ENCODE measurements at regions of chr17 and their contacts with region 1.

Region 1: GRCh38 chr17:64506576-64507477 is at the start of gene CEP95:
- DNase-seq: peak in 7 of 9 donors; percentile 85 to 98 (median 97)
- ATAC-seq: peak; percentile 78
- H3K4me3 ChIP-seq: peak within 1 kb of the TSS; percentile 98
- H3K4me3 Mint-ChIP-seq: peak within 1 kb of the TSS; percentile 97 to 100 (median 99)
- H3K27ac ChIP-seq: peak within 1 kb of the TSS; percentile 100
- H3K27ac Mint-ChIP-seq: peak within 1 kb of the TSS; percentile 99 to 100 (median 100)
- H3K4me1 ChIP-seq: peaks cover 41 to 42% of the 10 kb centered on the region in 2 donors
- H3K4me1 Mint-ChIP-seq: peaks cover 31 to 84% (median 70%) of the 10 kb centered on the region in 7 donors
- H3K27me3 ChIP-seq: no peaks in the 10 kb centered on the region
- H3K27me3 Mint-ChIP-seq: peaks cover 0 to 11% (median 0%) of the 10 kb centered on the region in 5 donors
- total RNA-seq, gene CEP95: 46.7 to 192 (median 115) TPM

Region 2: GRCh38 chr17:63621766-63622519 is 884.9 kb before region 1 on chr17 and contains the start of gene MAP3K3:
- CTCF ChIA-PET with region 1: no interaction called
- POLR2A ChIA-PET with region 1: no interaction called
- intact Hi-C with region 1: loop called in 1 of 2 experiments (anchors 2 kb)
- DNase-seq: peak; percentile 79 to 99 (median 98)
- ATAC-seq: peak; percentile 93
- H3K4me3 ChIP-seq: peak within 1 kb of the TSS; percentile 82
- H3K4me3 Mint-ChIP-seq: peak within 1 kb of the TSS; percentile 96 to 100 (median 99)
- H3K27ac ChIP-seq: peak within 1 kb of the TSS; percentile 75
- H3K27ac Mint-ChIP-seq: peak within 1 kb of the TSS; percentile 83 to 97 (median 95)
- H3K4me1 ChIP-seq: peaks cover 21 to 31% of the 10 kb centered on the region in 2 donors
- H3K4me1 Mint-ChIP-seq: peaks cover 34 to 48% (median 42%) of the 10 kb centered on the region in 7 donors
- H3K27me3 ChIP-seq: peaks cover 0 to 3% of the 10 kb centered on the region in 2 donors
- H3K27me3 Mint-ChIP-seq: peaks cover 0 to 12% (median 0%) of the 10 kb centered on the region in 5 donors
- total RNA-seq, gene MAP3K3: 37.5 to 105 (median 85.5) TPM

Region 3: GRCh38 chr17:64020056-64020766 is 486.6 kb before region 1 on chr17 and contains the start of gene ICAM2:
- CTCF ChIA-PET with region 1: no interaction called
- POLR2A ChIA-PET with region 1: interaction called, 18 read pairs
- intact Hi-C with region 1: loop called (anchors 2 to 5 kb)
- DNase-seq: peak; percentile 73 to 97 (median 96)
- ATAC-seq: peak; percentile 90
- H3K4me3 ChIP-seq: peak within 1 kb of the TSS; percentile 94
- H3K4me3 Mint-ChIP-seq: peak within 1 kb of the TSS; percentile 91 to 100 (median 98)
- H3K27ac ChIP-seq: peak within 1 kb of the TSS; percentile 96
- H3K27ac Mint-ChIP-seq: peak within 1 kb of the TSS; percentile 91 to 100 (median 100)
- H3K4me1 ChIP-seq: peaks cover 57 to 68% of the 10 kb centered on the region in 2 donors
- H3K4me1 Mint-ChIP-seq: peaks cover 45 to 79% (median 71%) of the 10 kb centered on the region in 7 donors
- H3K27me3 ChIP-seq: no peaks in the 10 kb centered on the region
- H3K27me3 Mint-ChIP-seq: peaks cover 0 to 2% (median 0%) of the 10 kb centered on the region in 5 donors
- total RNA-seq, gene ICAM2: 60.9 to 132 (median 92.3) TPM

Region 4: DNA sequence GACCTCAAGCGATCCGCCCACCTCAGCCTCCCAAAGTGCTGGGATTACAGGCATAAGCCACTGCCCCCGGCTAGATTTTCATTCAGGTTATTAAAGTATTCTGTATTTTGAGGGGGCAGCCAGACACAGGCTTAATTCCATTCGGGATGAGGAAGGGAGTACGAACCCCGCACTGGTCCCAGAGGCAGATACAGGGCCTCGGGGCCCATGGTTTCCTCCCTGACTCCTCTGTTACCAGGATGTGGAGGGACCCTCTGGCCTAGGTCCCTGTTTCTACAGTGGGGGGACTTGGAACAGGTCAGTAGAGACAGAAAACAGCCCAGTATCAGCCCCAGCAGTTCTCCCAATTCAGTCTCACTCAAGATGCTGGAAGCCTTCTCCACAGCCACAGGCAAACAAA is 158.2 kb before region 1 on chr17:
- CTCF ChIA-PET with region 1: no interaction called
- POLR2A ChIA-PET with region 1: interaction called, 24 read pairs
- intact Hi-C with region 1: loop called in 1 of 2 experiments (anchors 1 kb)
- DNase-seq: no peak
- ATAC-seq: no peak
- H3K4me3 ChIP-seq: no peak overlapping the region
- H3K4me3 Mint-ChIP-seq: peak overlapping the region in 6 of 10 donors; percentile 21 to 86 (median 73)
- H3K27ac ChIP-seq: peak overlapping the region; percentile 62
- H3K27ac Mint-ChIP-seq: peak overlapping the region in 8 of 9 donors; percentile 90 to 99 (median 95)
- H3K4me1 ChIP-seq: peaks cover 7 to 36% of the 10 kb centered on the region in 2 donors
- H3K4me1 Mint-ChIP-seq: peaks cover 19 to 58% (median 36%) of the 10 kb centered on the region in 7 donors
- H3K27me3 ChIP-seq: no peaks in the 10 kb centered on the region
- H3K27me3 Mint-ChIP-seq: peaks cover 0 to 2% (median 0%) of the 10 kb centered on the region in 5 donors

Region 5: GRCh38 chr17:64599187-64599676 is 92.4 kb after region 1 on chr17:
- CTCF ChIA-PET with region 1: no interaction called
- POLR2A ChIA-PET with region 1: interaction called, 6 read pairs
- intact Hi-C with region 1: loop called in 1 of 2 experiments (anchors 5 kb)
- DNase-seq: peak; percentile 21 to 60 (median 39)
- ATAC-seq: peak; percentile 99
- H3K4me3 ChIP-seq: no peak overlapping the region
- H3K4me3 Mint-ChIP-seq: peak overlapping the region; percentile 65 to 86 (median 76)
- H3K27ac ChIP-seq: peak overlapping the region; percentile 40
- H3K27ac Mint-ChIP-seq: peak overlapping the region; percentile 64 to 95 (median 79)
- H3K4me1 ChIP-seq: peaks cover 8 to 14% of the 10 kb centered on the region in 2 donors
- H3K4me1 Mint-ChIP-seq: peaks cover 27 to 52% (median 38%) of the 10 kb centered on the region in 7 donors
- H3K27me3 ChIP-seq: no peaks in the 10 kb centered on the region
- H3K27me3 Mint-ChIP-seq: no peaks in the 10 kb centered on the region

Region 6: GRCh38 chr17:64736804-64737492 is 230.1 kb after region 1 on chr17:
- CTCF ChIA-PET with region 1: no interaction called
- POLR2A ChIA-PET with region 1: interaction called, 3 read pairs
- intact Hi-C with region 1: loop called in 1 of 2 experiments (anchors 5 kb)
- DNase-seq: peak in 8 of 9 donors; percentile 15 to 59 (median 53)
- ATAC-seq: peak; percentile 78
- H3K4me3 ChIP-seq: no peak overlapping the region
- H3K4me3 Mint-ChIP-seq: peak overlapping the region in 1 of 10 donors; percentile 39
- H3K27ac ChIP-seq: no peak overlapping the region
- H3K27ac Mint-ChIP-seq: peak overlapping the region in 3 of 9 donors; percentile 8 to 59 (median 9)
- H3K4me1 ChIP-seq: peaks cover 0 to 12% of the 10 kb centered on the region in 2 donors
- H3K4me1 Mint-ChIP-seq: peaks cover 6 to 26% (median 18%) of the 10 kb centered on the region in 7 donors
- H3K27me3 ChIP-seq: no peaks in the 10 kb centered on the region
- H3K27me3 Mint-ChIP-seq: no peaks in the 10 kb centered on the region

Region 7: DNA sequence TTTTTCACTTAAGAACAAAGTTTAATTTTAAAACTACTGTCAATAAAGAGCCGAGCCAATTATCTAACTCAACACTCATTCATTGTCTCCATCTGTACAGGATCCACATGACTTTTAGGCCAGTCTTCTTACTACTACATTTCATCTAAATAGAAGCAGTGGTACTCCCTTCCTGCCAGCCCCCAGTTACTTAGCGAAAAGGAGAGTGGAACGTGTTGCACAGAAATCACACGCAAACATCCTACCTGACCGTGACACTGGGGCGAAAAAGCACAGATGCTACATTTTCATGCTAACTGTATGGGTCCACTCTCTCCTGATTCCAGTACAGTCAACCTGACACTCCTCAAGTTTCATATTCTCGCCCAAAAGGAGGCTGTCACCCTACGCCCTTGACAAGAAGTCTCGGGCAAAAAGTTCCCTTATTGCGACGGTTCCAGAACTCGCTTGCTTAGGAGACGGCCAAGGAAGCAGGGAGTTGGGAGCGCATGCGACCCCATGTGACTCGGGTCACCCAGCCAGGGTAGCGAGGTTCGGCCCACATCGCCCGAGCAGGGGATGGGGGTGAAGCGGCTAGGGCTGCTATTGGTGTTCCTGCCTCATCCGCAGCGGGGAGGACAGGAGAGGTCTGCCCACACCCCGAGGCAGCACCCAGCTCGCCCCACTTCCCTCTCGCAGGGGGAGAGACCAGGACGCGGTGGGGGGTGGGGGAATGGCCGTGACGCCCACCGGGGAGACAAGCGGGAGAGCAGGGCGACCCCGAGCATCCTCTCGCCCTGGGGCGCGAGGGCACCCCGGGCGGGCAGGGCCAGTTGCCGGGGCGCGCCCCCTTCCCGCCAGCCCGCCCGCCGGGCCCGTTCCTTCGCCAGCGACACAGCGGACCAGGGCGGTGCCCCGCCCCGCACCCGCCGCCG is 548.8 kb after region 1 on chr17:
- CTCF ChIA-PET with region 1: no interaction called
- POLR2A ChIA-PET with region 1: interaction called, 4 read pairs
- intact Hi-C with region 1: loop called in 1 of 2 experiments (anchors 5 kb)
- DNase-seq: peak; percentile 27 to 69 (median 40)
- ATAC-seq: peak; percentile 17
- H3K4me3 ChIP-seq: peak overlapping the region; percentile 94
- H3K4me3 Mint-ChIP-seq: peak overlapping the region; percentile 89 to 100 (median 96)
- H3K27ac ChIP-seq: peak overlapping the region; percentile 99
- H3K27ac Mint-ChIP-seq: peak overlapping the region; percentile 93 to 99 (median 96)
- H3K4me1 ChIP-seq: peaks cover 17 to 20% of the 10 kb centered on the region in 2 donors
- H3K4me1 Mint-ChIP-seq: peaks cover 33 to 58% (median 47%) of the 10 kb centered on the region in 7 donors
- H3K27me3 ChIP-seq: no peaks in the 10 kb centered on the region
- H3K27me3 Mint-ChIP-seq: peaks cover 0 to 10% (median 0%) of the 10 kb centered on the region in 5 donors